ENCODE measurements at regions of chr17 and their contacts with region 1.

Region 1: DNA sequence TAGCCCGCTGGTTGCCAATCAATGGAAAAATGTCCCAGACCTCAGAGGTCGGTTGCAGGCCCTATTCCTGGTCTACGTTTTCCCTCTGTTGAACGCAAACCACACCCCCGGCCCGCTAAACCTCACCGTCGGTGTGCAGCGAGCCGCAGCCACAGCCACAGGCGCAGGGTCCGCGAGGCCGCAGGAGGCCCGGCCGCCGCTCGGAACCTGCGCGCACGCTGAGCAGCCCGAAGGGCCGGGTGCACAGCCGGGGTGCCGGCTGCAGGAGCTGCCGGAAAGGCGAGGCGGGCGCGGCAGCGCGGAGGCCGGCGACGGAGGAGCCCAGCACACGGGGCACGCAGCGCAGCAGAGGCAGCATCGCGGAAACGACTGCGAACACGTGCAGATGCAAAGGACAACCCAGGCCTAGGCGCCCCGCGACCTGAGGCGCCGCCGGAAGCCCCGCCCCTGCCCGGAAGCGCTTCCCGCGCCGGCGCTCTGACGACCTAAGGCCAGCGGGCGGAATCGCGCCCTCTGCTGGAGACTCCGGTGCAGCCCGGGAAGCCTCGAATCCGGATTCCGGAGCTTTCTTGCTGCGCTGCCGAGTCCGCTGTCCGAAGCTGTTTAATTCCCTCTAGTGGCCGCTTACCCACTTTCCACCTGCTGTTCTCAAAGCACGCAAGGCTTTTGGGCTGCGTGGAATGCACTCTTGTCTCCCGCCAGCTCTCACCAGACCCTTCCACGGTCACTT is at the start of gene C1QBP:
- DNase-seq: peak; percentile 96
- ATAC-seq: peak; percentile 92
- H3K4me3 Mint-ChIP-seq: peak within 1 kb of the TSS; percentile 89
- H3K27ac Mint-ChIP-seq: peak within 1 kb of the TSS; percentile 92
- H3K4me1 Mint-ChIP-seq: peaks cover 44% of the 10 kb centered on the region
- H3K27me3 Mint-ChIP-seq: no peaks in the 10 kb centered on the region
- total RNA-seq, gene C1QBP: 432 to 457 TPM

Region 2: DNA sequence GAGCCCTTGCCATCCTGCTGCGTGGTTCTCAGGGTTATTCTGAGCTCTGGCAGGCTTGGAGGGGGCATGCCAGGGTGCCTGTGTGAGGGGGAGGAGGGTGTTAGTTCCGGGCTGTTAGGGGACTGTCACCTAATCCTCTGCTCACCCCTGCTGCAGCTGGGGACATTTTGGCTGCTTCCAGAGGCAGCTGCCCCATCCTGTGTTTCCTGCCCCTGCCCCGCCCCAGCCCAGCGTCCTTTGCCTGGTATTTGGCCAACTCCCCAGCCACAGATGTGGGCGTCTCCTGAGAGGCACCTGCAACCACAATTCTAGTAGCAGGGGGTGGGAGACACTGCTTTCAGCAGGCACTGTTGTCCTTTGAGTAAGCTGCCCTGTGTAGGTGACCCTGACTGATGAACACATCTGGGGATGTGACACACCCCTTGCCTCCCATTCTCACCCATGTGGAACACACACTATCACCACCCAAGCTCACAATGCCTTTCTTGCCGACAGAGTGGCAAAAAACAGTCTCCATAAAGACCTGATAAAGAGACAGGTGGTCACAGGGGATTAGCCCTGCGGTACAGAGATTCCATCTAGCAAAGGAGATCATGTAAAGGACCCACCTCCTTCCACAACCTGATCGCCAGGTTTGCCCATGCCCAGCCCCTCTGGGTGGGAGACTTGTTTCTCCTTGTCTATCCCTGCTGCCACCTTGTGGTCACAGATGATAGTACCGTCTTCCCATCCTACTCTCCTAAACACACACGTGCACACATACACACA is 535.6 kb before region 1 on chr17 and contains the start of gene CHRNE:
- CTCF ChIA-PET with region 1: no interaction called
- POLR2A ChIA-PET with region 1: no interaction called
- intact Hi-C with region 1: loop called in 1 of 2 experiments (anchors 5 kb)
- DNase-seq: peak; percentile 89
- ATAC-seq: peak; percentile 44
- H3K4me3 Mint-ChIP-seq: peak within 1 kb of the TSS; percentile 65
- H3K27ac Mint-ChIP-seq: peak within 1 kb of the TSS; percentile 72
- H3K4me1 Mint-ChIP-seq: peaks cover 26% of the 10 kb centered on the region
- H3K27me3 Mint-ChIP-seq: no peaks in the 10 kb centered on the region
- total RNA-seq, gene CHRNE: 0.59 to 0.84 TPM

Region 3: GRCh38 chr17:5249615-5250014 is 189.3 kb before region 1 on chr17:
- CTCF ChIA-PET with region 1: interaction called, 16 read pairs
- POLR2A ChIA-PET with region 1: no interaction called
- intact Hi-C with region 1: loop called (anchors 1 to 5 kb)
- DNase-seq: peak; percentile 80
- ATAC-seq: peak; percentile 91
- H3K4me3 Mint-ChIP-seq: no peak overlapping the region
- H3K27ac Mint-ChIP-seq: no peak overlapping the region
- H3K4me1 Mint-ChIP-seq: peaks cover 8% of the 10 kb centered on the region
- H3K27me3 Mint-ChIP-seq: no peaks in the 10 kb centered on the region

Region 4: DNA sequence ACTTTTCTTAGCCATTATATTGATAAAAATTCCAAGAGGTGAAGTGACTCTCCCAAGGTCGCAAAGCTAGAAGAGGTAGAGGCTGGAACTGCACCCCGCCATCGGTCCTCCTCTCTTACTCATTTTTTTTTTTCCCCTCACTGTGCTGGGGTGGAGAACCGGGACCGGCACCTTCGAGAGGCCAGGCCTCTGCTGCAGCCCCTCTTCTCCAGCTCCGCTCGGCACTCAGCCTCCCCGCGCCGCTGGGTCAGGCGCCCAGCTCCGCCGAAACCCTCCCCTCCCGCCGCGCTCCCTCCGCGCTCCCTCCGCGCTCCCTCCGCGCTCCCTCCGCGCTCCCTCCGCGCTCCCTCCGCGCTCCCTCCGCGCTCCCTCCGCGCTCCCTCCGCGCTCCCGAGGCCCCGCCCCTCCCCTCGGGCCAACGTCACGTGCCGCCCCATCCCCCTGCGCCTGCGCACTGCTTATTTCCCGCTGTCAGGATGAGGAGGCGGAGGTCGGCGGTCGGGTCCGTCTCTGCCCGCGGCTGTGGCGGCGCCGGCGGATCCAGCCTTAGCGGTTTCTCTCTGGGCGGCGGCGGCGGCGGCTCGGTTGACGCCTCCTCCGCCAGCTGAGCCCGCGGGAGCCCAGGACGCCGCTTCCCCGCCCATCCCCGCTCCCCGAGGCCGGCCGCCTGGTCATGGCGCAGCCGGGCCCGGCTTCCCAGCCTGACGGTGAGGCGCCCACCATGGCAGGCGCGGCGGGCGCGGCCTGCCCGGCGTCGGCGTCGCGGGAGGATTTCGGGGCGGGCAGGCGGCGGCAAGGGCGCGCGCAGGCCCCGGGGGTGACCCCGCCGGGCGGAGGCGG is 156.8 kb before region 1 on chr17 and contains the start of gene RABEP1:
- CTCF ChIA-PET with region 1: no interaction called
- POLR2A ChIA-PET with region 1: no interaction called
- intact Hi-C with region 1: loop called in 1 of 2 experiments (anchors 1 kb)
- DNase-seq: peak; percentile 97
- ATAC-seq: peak; percentile 81
- H3K4me3 Mint-ChIP-seq: peak within 1 kb of the TSS; percentile 86
- H3K27ac Mint-ChIP-seq: peak within 1 kb of the TSS; percentile 90
- H3K4me1 Mint-ChIP-seq: peaks cover 32% of the 10 kb centered on the region
- H3K27me3 Mint-ChIP-seq: no peaks in the 10 kb centered on the region
- total RNA-seq, gene RABEP1: 60.4 to 66.2 TPM

Region 5: GRCh38 chr17:5413682-5414081 is 25.2 kb before region 1 on chr17:
- CTCF ChIA-PET with region 1: interaction called, 12 read pairs
- POLR2A ChIA-PET with region 1: interaction called, 4 read pairs
- intact Hi-C with region 1: no loop called
- DNase-seq: no peak
- ATAC-seq: peak; percentile 76
- H3K4me3 Mint-ChIP-seq: peak overlapping the region; percentile 10
- H3K27ac Mint-ChIP-seq: peak overlapping the region; percentile 83
- H3K4me1 Mint-ChIP-seq: peaks cover 59% of the 10 kb centered on the region
- H3K27me3 Mint-ChIP-seq: no peaks in the 10 kb centered on the region

Region 6: DNA sequence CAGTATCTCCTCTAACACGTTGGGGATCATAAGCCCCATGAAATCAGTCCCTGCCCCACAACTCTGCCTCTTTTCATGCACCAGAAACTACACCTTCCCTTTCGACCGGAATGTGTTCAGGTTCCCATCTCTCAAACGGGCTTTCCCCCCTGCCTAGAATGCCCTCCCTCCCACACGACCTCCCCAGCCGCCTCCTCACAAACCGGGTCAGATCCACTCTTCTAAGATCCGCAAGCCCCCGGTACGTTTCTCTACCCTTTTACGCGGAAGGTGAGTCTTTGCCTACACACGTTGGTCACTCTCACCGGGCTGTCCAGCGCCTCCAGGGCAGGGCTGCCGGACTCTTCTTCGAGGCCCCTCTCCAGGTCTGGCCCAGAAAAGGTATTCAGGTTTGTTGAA is 29.2 kb after region 1 on chr17:
- CTCF ChIA-PET with region 1: interaction called, 6 read pairs
- POLR2A ChIA-PET with region 1: interaction called, 5 read pairs
- intact Hi-C with region 1: loop called (anchors 1 to 2 kb)
- DNase-seq: peak; percentile 35
- ATAC-seq: peak; percentile 14
- H3K4me3 Mint-ChIP-seq: peak overlapping the region; percentile 90
- H3K27ac Mint-ChIP-seq: peak overlapping the region; percentile 75
- H3K4me1 Mint-ChIP-seq: peaks cover 38% of the 10 kb centered on the region
- H3K27me3 Mint-ChIP-seq: no peaks in the 10 kb centered on the region

Region 7: GRCh38 chr17:5584383-5585286 is 145.8 kb after region 1 on chr17 and contains the start of gene NLRP1:
- CTCF ChIA-PET with region 1: no interaction called
- POLR2A ChIA-PET with region 1: no interaction called
- intact Hi-C with region 1: loop called in 1 of 2 experiments (anchors 1 kb)
- DNase-seq: peak; percentile 97
- ATAC-seq: peak; percentile 93
- H3K4me3 Mint-ChIP-seq: peak within 1 kb of the TSS; percentile 92
- H3K27ac Mint-ChIP-seq: peak within 1 kb of the TSS; percentile 94
- H3K4me1 Mint-ChIP-seq: peaks cover 62% of the 10 kb centered on the region
- H3K27me3 Mint-ChIP-seq: no peaks in the 10 kb centered on the region
- total RNA-seq, gene NLRP1: 31.2 to 34.0 TPM

Measured in activated CD4-positive, alpha-beta T cell treated with anti-CD3 and anti-CD28 coated beads for 36 hours (primary cell).